ENCODE measurements at regions of chr1 and their contacts with region 1.

Region 1: GRCh38 chr1:3624200-3625136 is at the start of gene TPRG1L:
- DNase-seq: peak; percentile 98 to 99
- ATAC-seq: peak; percentile 88
- total RNA-seq, gene TPRG1L: 88.5 to 93.9 TPM

Region 2: GRCh38 chr1:3441410-3441847 is 183.0 kb before region 1 on chr1:
- intact Hi-C with region 1: no loop called
- DNase-seq: no peak
- ATAC-seq: no peak

Region 3: DNA sequence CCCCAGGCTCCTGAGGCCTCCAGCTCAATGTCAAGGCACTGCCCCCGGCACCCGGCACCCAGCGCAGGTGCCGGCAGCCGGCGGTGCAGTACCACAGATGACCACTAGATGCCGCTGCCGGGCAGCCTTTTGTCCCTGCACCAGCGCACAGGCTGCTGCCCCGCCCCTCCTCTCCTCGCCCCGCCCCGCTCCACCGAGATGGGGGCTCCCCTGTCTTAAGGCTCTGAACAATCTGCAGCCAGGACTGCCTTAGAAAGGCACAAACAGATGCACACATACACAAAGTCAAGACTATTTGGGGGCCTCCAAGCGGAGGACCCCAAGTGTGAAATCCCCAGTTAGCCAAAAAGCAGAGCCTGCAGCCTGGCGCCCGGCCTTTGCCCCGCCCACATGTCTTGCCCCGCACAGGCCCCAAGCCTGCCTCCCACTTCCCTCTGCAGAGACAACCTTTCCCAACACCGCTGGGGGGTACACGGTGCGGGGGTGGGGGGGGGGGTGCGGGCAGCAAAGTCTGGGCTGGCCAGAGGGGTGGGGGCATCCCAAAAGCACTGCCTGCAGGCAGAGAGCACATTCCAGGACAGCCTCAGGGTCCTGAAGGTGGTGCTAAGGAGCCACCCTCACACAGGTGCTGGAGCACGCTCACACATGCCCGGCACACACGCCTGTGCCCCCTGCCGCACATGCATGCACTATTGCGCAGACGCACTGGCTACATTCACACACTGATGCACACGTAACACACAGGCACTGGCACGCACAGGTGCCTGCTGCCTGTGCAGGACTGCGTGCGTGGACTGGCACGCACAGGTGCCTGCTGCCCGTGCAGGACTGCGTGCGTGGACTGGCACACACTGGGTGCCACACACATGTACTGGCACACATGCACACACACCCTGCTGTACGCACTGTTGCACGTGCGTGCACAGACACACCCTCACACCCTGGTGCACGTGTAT is 132.9 kb before region 1 on chr1:
- intact Hi-C with region 1: loop called (anchors 5 kb)
- DNase-seq: peak; percentile 60 to 83
- ATAC-seq: peak; percentile 78

Region 4: GRCh38 chr1:3910857-3911845 is 286.7 kb after region 1 on chr1:
- intact Hi-C with region 1: no loop called
- DNase-seq: peak; percentile 61 to 88
- ATAC-seq: peak; percentile 88

Measured in left colon (tissue), 2 donors.